Ascending aorta (tissue), 2 donors: ENCODE measurements at regions of chr22 and their contacts with region 1.

Region 1: DNA sequence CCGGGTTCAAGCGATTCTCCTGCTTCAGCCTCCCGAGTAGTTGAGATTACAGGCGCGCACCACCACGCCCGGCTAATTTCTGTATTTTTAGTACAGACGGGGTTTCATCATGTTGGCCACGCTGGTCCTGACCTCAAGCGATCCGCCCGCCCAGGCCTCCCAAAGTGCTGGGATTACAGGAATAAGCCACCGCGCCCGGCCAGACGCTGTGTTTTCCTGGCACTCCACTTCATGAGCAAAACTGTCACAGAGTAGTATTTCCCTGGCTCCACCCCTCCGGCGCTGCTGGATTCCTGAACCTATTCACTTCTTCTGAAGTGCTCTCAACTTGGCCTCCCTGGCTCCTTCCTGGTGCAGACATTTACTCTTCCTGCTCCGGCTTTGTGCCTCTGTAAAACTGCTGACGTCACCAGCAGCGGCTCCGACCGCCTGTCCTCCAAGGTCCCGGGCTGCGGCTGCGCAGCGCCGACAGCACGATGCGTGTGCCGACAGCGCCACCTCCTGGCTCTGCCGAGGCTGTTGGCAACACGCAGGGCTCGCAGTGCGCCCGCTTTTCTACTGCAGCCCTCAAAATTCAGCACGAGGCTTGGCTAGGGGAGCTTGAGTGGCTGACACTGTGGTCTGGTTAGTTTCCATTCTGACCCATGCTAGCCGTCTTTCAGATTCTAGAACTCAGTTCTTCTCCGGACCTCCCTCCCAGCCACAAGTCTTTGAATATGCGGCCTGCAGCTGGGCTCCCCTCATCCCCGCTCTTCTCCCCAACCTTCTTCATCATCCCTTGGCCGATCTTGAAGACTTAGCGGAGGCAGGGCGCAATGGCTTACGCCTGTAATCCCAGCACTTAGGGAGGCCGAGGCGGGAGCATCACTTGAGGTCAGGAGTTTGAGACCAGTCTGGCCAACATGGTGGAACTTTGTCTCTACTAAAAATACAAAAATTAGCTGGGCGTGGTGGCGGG is 36.6 kb downstream of the APOL3 start:
- DNase-seq: peak; percentile 85 to 97
- H3K4me3 ChIP-seq: peak overlapping the region in 1 of 2 donors; percentile 50
- H3K27ac ChIP-seq: peak overlapping the region; percentile 84 to 89
- H3K4me1 ChIP-seq: no peaks in the 10 kb centered on the region
- H3K27me3 ChIP-seq: no peaks in the 10 kb centered on the region
- CTCF ChIP-seq: peak; percentile 96 to 98 (median 98)

Region 2: DNA sequence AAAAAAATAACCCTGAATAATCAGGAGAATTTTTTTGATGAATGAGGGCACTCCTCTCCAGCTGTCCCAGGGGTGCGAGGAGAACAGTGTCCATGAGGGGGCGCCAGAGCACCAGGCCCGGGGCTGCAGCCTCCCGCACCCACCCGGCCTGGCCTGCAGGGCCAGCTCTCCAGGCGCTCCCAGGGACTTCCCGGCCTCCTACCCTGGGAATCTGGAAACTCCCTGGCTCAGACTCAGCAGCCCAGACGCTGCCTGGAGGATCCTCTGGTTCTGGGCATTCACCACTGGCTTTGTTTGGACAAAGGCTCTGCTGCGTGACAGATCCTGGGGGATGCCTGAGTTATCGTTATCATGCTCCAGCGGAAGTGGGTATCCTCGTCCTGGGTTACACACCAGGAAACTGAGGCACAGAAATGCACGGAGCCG is 693.0 kb before region 1 on chr22:
- intact Hi-C with region 1: loop called (anchors 10 kb)
- DNase-seq: peak; percentile 29 to 90
- H3K4me3 ChIP-seq: no peak overlapping the region
- H3K27ac ChIP-seq: peak overlapping the region in 1 of 2 donors; percentile 3
- H3K4me1 ChIP-seq: peaks cover 0 to 7% of the 10 kb centered on the region in 2 donors
- H3K27me3 ChIP-seq: no peaks in the 10 kb centered on the region
- CTCF ChIP-seq: peak; percentile 95 to 97 (median 96)

Region 3: DNA sequence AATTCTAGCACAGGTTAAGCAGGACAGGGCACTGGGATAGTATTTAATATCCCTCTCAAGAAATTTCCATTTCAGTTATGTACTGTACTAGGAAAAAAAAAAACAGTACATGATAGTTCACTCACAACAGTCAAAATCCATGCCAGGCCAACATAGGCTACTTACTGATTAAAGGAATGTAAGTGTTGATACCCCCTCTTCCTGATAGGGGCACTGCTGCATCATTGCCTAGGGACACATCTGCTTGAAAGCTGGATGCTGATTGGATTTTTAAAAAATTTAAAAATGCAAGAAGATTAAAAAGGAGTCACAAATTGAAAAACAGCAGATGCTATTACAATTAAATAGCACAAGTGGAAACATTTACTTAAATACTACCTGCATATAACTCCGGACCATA is 362.9 kb before region 1 on chr22:
- intact Hi-C with region 1: loop called (anchors 10 kb)
- DNase-seq: no peak
- H3K4me3 ChIP-seq: no peak overlapping the region
- H3K27ac ChIP-seq: no peak overlapping the region
- H3K4me1 ChIP-seq: no peaks in the 10 kb centered on the region
- H3K27me3 ChIP-seq: no peaks in the 10 kb centered on the region
- CTCF ChIP-seq: peak in 2 of 3 experiments; percentile 18 to 37

Region 4: DNA sequence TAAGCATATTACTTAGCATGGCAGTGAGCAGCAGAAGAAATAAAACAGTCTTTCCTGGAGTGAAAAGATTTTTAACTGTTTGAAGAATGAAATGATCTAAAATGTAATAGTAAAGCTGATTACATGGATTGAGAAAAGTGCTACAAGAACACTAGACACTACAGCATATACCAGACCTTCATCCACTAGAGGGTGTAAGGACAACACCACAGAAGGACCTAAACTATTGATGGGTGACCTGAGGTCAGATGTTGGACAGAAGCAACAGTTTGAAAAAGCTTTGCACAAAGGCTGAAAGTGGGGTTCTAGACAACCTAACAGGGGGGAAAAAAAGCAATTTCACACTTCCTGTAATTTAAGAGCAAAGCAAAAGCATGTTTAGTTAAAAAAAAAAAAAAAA is 193.0 kb before region 1 on chr22:
- intact Hi-C with region 1: loop called (anchors 1 kb)
- DNase-seq: no peak
- H3K4me3 ChIP-seq: no peak overlapping the region
- H3K27ac ChIP-seq: no peak overlapping the region
- H3K4me1 ChIP-seq: no peaks in the 10 kb centered on the region
- H3K27me3 ChIP-seq: no peaks in the 10 kb centered on the region
- CTCF ChIP-seq: peak; percentile 56 to 72 (median 71)

Region 5: GRCh38 chr22:36065775-36066559 is 58.0 kb before region 1 on chr22:
- intact Hi-C with region 1: loop called (anchors 1 kb)
- DNase-seq: peak; percentile 77 to 97
- H3K4me3 ChIP-seq: peak overlapping the region; percentile 61 to 64
- H3K27ac ChIP-seq: peak overlapping the region; percentile 83 to 87
- H3K4me1 ChIP-seq: peaks cover 0 to 3% of the 10 kb centered on the region in 2 donors
- H3K27me3 ChIP-seq: no peaks in the 10 kb centered on the region
- CTCF ChIP-seq: peak; percentile 99 to 100 (median 99)